ENCODE measurements at regions of chr3 and their contacts with region 1.

Region 1: DNA sequence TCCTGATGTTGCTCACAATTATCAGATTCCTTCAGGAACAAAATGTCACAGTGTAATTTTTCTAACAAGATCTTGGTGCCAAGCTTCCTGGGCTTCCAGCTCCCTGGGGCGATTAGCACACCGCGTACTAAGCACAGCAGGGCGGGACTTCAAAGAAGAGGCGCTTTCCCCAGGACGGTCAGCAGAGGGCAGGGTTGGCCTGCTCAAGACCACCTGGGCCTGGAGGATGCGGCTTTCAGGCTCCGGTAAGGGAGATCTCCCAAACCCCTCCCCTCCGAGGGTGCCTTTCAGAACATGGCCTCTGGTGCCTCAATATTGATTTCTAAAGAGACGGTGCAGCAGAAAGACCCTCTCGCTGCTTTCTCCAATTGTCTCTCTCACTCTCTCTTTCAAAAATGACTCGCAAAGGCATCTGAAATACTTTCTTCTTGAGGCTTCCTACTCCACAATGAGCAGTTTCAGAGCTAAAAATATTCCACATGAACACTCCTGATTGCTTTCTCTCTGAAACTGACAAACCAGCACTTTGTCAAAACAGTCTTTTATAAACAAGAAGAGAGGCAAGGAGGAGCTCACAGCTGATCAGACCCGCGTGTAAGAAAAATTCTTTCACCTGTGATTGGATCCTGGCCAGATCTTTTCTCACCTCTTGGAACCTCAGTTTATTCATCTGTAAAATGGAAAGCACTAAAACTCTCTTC is 154.0 kb downstream of the ADAMTS9 start:
- DNase-seq: peak; percentile 63 to 78 (median 68)
- ATAC-seq: peak; percentile 98
- H3K4me3 ChIP-seq: no peak overlapping the region
- H3K27ac ChIP-seq: no peak overlapping the region
- H3K4me1 ChIP-seq: no peaks in the 10 kb centered on the region
- H3K27me3 ChIP-seq: no peaks in the 10 kb centered on the region; a peak in 1 of 5 replicates
- CTCF ChIP-seq: peak; percentile 71 to 79 (median 73)
- EP300 ChIP-seq: no peak
- POLR2A ChIP-seq: no peak
- RAD21 ChIP-seq: peak; percentile 74 to 78

Region 2: GRCh38 chr3:64945171-64945729 is 411.5 kb after region 1 on chr3:
- CTCF ChIA-PET with region 1: no interaction called
- POLR2A ChIA-PET with region 1: no interaction called
- in situ Hi-C with region 1: no loop called
- intact Hi-C with region 1: no loop called
- DNase-seq: peak in 2 of 4 experiments; percentile 3 to 8
- ATAC-seq: peak; percentile 37; the same call in 1 of the 3 replicates
- H3K4me3 ChIP-seq: no peak overlapping the region
- H3K27ac ChIP-seq: no peak overlapping the region
- H3K4me1 ChIP-seq: peaks cover 0 to 2% of the 10 kb centered on the region in 2 experiments; a peak in 2 of 5 replicates
- H3K27me3 ChIP-seq: no peaks in the 10 kb centered on the region
- CTCF ChIP-seq: no peak
- EP300 ChIP-seq: no peak
- POLR2A ChIP-seq: no peak
- RAD21 ChIP-seq: no peak

Region 3: DNA sequence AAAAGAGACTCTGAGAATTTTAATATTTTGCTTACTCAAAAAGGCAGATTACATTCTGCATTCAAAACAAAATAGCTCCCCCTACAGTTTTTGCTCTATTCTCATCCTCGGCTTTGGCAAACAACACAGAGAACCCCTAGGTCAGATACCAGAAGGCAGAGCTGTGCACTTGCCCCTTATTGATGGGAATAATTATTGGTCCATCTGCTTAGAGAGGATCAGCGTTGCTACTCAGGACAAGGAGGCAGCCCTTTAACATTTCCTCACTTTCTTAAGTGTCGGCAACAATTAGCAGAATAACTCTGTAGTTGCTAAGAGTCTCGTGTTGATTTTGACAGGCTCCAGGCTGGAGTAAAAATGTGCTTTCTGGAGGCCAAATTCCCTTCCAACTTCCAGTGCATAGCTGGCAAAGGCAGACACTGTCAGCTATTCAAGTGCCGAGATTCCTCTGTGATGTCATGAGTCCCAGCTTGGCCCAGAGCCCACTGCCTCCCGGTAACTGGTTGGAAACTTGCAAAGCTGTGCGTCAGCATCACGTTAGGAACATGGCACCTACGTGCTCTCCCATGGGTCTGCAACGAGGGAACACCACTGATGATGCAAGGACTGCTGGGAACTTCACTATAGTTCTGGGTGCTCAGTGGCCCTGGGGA is 636.7 kb after region 1 on chr3:
- CTCF ChIA-PET with region 1: no interaction called
- POLR2A ChIA-PET with region 1: no interaction called
- in situ Hi-C with region 1: loop called (anchors 25 kb)
- intact Hi-C with region 1: loop called (anchors 5 kb)
- DNase-seq: peak in 3 of 4 experiments; percentile 6 to 27 (median 21)
- ATAC-seq: peak; percentile 76
- H3K4me3 ChIP-seq: no peak overlapping the region
- H3K27ac ChIP-seq: no peak overlapping the region
- H3K4me1 ChIP-seq: no peaks in the 10 kb centered on the region
- H3K27me3 ChIP-seq: no peaks in the 10 kb centered on the region
- CTCF ChIP-seq: peak in 2 of 3 experiments; percentile 15 to 64; a peak in 4 of 6 replicates
- EP300 ChIP-seq: no peak
- POLR2A ChIP-seq: no peak
- RAD21 ChIP-seq: peak; percentile 59 to 71

Region 4: DNA sequence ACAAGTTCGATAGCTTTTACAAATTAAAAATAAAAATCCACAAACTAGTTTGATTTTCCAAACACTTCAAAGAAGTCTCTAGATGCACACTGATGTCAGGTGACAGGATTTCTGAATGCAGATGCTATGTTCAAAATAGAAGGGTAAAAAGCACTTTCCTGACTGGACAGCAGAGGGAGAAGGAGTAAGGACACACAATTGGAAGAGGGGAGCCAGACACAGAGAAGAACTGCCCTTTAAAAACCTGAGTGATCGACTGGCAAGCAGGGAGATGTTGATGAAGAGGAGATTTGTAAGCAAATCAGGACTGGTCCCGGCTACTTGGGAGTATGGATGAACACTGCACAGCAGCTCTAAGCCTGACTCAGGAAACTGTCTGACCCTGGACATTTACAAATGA is 892.1 kb after region 1 on chr3:
- CTCF ChIA-PET with region 1: no interaction called
- POLR2A ChIA-PET with region 1: no interaction called
- in situ Hi-C with region 1: loop called (anchors 10 kb)
- intact Hi-C with region 1: no loop called
- DNase-seq: peak in 1 of 4 experiments; percentile 3
- ATAC-seq: 0 out of 3 replicates have a peak, but pooled peaks have one; percentile 37
- H3K4me3 ChIP-seq: no peak overlapping the region
- H3K27ac ChIP-seq: no peak overlapping the region
- H3K4me1 ChIP-seq: no peaks in the 10 kb centered on the region
- H3K27me3 ChIP-seq: no peaks in the 10 kb centered on the region
- CTCF ChIP-seq: 0 out of 6 replicates have a peak, but pooled peaks of 2 of the 3 experiments have one; percentile 9 to 22
- EP300 ChIP-seq: no peak
- POLR2A ChIP-seq: no peak
- RAD21 ChIP-seq: peak in 1 of 2 experiments; percentile 28; a peak in 1 of 4 replicates

Region 5: GRCh38 chr3:65439641-65440284 is 906.0 kb after region 1 on chr3:
- CTCF ChIA-PET with region 1: no interaction called
- POLR2A ChIA-PET with region 1: no interaction called
- in situ Hi-C with region 1: no loop called
- intact Hi-C with region 1: loop called (anchors 2 kb)
- DNase-seq: peak; percentile 27 to 69 (median 52)
- ATAC-seq: peak; percentile 97
- H3K4me3 ChIP-seq: no peak overlapping the region
- H3K27ac ChIP-seq: no peak overlapping the region
- H3K4me1 ChIP-seq: no peaks in the 10 kb centered on the region
- H3K27me3 ChIP-seq: no peaks in the 10 kb centered on the region
- CTCF ChIP-seq: peak; percentile 58 to 66 (median 64)
- EP300 ChIP-seq: no peak
- POLR2A ChIP-seq: no peak
- RAD21 ChIP-seq: peak; percentile 68 to 83

Region 6: DNA sequence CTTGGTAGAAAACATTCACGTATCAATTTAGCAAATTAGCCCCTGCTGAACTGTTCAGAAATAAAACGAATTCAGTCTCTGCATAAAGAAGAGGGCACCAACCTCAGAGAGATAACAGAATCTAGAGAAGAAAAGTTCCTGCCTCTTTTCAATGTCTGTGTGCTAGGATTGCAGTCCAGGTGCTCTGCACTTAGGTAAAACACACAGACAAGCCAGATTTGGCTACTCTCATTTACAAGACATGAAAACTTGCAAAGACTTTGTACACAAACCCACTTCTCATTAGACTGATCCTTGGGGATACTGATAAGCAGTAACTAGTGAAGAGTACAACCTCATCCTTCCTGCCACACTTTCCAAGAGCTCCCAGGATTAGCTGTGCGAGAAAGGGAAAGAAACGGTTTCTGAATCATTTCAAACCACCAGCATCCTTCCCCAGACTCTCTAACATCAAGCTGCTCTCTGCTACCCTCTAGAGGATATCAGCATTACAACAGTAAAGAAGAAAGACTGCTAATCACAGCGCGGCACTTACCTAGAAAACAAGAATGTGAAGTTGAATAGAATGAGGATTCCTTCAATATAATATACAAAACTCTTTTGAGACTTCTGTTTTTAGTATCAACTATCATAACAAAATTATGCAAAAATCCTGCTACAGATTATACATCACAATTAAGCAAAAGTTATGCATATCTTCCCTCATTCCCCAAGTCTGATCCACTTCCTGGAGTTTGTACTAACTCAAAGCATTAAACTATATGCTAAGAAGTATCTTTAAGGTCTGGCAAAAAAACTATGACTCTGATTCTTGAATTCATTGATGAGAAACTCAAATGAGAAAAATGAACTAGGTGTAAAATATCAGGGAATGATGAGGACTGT is 1198.5 kb after region 1 on chr3:
- CTCF ChIA-PET with region 1: no interaction called
- POLR2A ChIA-PET with region 1: no interaction called
- in situ Hi-C with region 1: loop called (anchors 25 kb)
- intact Hi-C with region 1: no loop called
- DNase-seq: peak; percentile 39 to 65 (median 46)
- ATAC-seq: peak; percentile 88
- H3K4me3 ChIP-seq: no peak overlapping the region
- H3K27ac ChIP-seq: no peak overlapping the region
- H3K4me1 ChIP-seq: no peaks in the 10 kb centered on the region; a peak in 2 of 5 replicates
- H3K27me3 ChIP-seq: no peaks in the 10 kb centered on the region
- CTCF ChIP-seq: peak; percentile 63 to 71 (median 70)
- EP300 ChIP-seq: no peak
- POLR2A ChIP-seq: no peak
- RAD21 ChIP-seq: peak; percentile 51 to 74

Region 7: DNA sequence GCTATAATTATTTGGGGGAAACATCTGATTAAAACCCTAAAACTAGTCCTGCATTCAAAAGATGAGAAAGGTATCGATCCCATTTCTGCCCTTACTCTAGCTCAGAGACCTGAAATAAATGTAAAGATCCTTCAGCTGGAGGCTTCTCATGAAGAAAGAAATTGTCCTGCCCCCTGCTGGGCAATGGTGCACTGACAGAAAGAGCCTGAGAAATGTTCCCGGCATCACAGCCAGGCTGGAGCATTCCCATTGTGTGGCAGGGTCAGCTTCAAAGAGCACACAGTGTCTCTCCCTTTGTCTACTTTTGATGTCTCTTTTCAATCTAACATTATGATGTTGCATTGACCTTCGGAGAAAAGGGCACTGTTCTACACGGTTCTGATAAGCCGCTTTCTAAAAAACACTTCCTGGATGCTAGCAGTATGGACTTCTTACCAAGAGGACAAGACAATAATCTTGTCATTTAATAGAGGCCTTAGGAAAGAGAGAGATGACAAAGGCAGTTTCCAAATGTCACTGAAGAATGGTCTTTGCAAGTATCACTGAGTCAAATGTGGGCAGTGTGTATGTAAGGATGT is 1217.4 kb after region 1 on chr3:
- CTCF ChIA-PET with region 1: no interaction called
- POLR2A ChIA-PET with region 1: no interaction called
- in situ Hi-C with region 1: loop called (anchors 25 kb)
- intact Hi-C with region 1: loop called (anchors 5 kb)
- DNase-seq: peak; percentile 26 to 59 (median 40)
- ATAC-seq: peak; percentile 86
- H3K4me3 ChIP-seq: no peak overlapping the region
- H3K27ac ChIP-seq: no peak overlapping the region
- H3K4me1 ChIP-seq: no peaks in the 10 kb centered on the region
- H3K27me3 ChIP-seq: no peaks in the 10 kb centered on the region
- CTCF ChIP-seq: peak; percentile 52 to 67 (median 60)
- EP300 ChIP-seq: no peak
- POLR2A ChIP-seq: no peak
- RAD21 ChIP-seq: peak; percentile 40 to 64

Measured in K562 (cell line).